ENCODE measurements at regions of chr11 and their contacts with region 1.

Region 1: GRCh38 chr11:123549926-123550917 is 104.2 kb downstream of the SCN3B start:
- DNase-seq: no peak
- ATAC-seq: no peak
- H3K4me3 ChIP-seq: no peak overlapping the region
- H3K27ac ChIP-seq: no peak overlapping the region
- H3K4me1 ChIP-seq: peaks cover 0 to 16% (median 11%) of the 10 kb centered on the region in 9 donors
- H3K27me3 ChIP-seq: no peaks in the 10 kb centered on the region
- CTCF ChIP-seq: no peak

Region 2: GRCh38 chr11:123448823-123449222 is 101.4 kb before region 1 on chr11:
- intact Hi-C with region 1: no loop called
- DNase-seq: no peak
- ATAC-seq: no peak
- H3K4me3 ChIP-seq: no peak overlapping the region
- H3K27ac ChIP-seq: no peak overlapping the region
- H3K4me1 ChIP-seq: peaks cover 0 to 37% (median 22%) of the 10 kb centered on the region in 9 donors
- H3K27me3 ChIP-seq: no peaks in the 10 kb centered on the region
- CTCF ChIP-seq: no peak

Region 3: DNA sequence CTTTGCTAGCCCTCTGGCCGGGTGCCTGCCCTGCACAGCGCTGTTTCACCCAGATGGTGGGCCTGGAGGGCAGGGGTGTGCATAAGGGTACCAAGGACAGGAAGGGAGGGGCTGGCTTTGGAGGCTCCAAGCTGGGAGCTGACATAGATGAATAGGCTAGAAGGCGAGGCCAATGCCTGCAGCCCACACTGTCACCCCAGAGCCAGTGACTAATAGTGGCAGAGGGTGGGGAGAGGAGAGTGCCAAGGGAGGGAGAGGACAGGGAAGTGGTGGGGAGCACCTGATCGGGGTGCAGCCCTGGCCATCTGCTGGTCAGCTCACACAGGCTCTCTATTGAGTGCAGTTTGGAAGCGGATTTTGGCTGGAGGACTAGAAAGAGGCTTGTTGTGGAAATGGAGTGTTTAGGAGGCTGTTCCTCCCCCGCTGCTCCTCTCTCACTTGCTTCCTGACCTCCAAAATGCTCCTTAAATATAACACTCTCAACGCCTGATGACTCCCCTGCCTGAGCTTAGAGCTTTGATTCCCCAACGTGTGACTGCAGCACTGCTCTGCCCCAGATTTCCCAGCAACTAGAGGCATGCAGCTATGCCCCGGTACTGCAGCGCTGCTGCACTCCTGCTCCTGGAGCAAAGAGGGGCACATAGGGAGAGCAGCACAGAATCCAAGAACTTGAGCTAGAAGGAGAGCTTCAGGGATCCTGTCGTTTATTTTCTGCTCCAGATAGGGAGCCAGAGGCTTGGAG is 31.0 kb before region 1 on chr11:
- intact Hi-C with region 1: loop called in 6 of 10 experiments (anchors 5 kb)
- DNase-seq: no peak
- ATAC-seq: peak; percentile 39 to 80 (median 64)
- H3K4me3 ChIP-seq: no peak overlapping the region
- H3K27ac ChIP-seq: peak overlapping the region; percentile 24 to 75 (median 66)
- H3K4me1 ChIP-seq: peaks cover under 1 to 40% (median 20%) of the 10 kb centered on the region in 9 donors
- H3K27me3 ChIP-seq: no peaks in the 10 kb centered on the region
- CTCF ChIP-seq: no peak